K562 (cell line): ENCODE measurements at regions of chr16 and their contacts with region 1.

Region 1: DNA sequence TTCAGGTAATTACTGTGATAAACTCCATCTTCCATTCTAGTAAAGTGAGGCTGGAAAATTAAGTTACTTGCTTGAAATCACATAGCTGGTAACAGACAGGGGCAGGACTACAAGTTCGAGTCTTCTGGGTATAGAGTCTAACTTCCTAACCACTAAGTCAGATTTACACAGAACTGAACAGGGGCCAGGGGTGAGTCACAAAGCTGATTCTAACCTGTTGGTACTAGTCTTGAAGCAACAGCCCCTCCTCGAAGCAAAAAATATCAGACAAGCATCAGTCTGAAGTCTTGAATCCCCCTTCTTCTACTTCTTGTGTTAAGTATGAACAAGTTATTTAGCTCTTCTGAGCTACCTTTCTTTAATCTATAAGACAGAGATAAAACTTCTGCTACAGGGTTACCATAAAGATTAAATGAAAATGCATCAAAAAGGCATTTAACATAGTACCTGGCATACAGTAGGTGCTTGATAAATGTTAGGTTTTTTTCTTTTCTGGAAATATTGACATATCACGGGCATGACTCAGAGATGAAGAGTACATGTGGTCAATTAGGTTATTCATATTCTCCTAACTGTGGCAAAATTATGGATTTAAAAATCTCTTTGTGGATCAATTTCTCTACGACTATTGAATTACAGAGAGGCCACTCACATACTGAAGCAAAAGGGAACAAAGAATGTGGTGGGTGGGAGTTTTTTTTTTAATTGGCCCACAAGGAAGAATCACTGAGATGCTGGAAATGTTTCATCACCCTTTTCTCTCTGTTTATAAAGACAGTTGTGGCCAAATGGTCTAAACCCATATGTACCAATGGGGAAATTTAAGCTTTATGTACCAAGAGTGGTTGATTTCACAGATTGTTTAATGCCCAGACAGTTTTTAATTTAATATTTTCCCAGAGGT is 266.9 kb upstream of the DYNLRB2 start:
- DNase-seq: no peak
- ATAC-seq: no peak
- H3K4me3 ChIP-seq: no peak overlapping the region
- H3K27ac ChIP-seq: no peak overlapping the region
- H3K4me1 ChIP-seq: no peaks in the 10 kb centered on the region
- H3K27me3 ChIP-seq: 0 out of 5 replicates have a peak, but pooled peaks cover 0 to 3% of the 10 kb centered on the region in 2 experiments
- CTCF ChIP-seq: no peak
- EP300 ChIP-seq: no peak
- POLR2A ChIP-seq: no peak
- RAD21 ChIP-seq: no peak

Region 2: GRCh38 chr16:80466024-80466987 is 192.4 kb after region 1 on chr16:
- CTCF ChIA-PET with region 1: no interaction called
- POLR2A ChIA-PET with region 1: no interaction called
- in situ Hi-C with region 1: no loop called
- intact Hi-C with region 1: loop called (anchors 10 kb)
- DNase-seq: peak; percentile 80 to 86 (median 85)
- ATAC-seq: peak; percentile 100
- H3K4me3 ChIP-seq: no peak overlapping the region
- H3K27ac ChIP-seq: no peak overlapping the region
- H3K4me1 ChIP-seq: no peaks in the 10 kb centered on the region
- H3K27me3 ChIP-seq: no peaks in the 10 kb centered on the region
- CTCF ChIP-seq: peak; percentile 81 to 95 (median 90)
- EP300 ChIP-seq: no peak
- POLR2A ChIP-seq: no peak
- RAD21 ChIP-seq: peak; percentile 87 to 94